BJ (cell line): ENCODE measurements at regions of chr5 and their contacts with region 1.

Region 1: DNA sequence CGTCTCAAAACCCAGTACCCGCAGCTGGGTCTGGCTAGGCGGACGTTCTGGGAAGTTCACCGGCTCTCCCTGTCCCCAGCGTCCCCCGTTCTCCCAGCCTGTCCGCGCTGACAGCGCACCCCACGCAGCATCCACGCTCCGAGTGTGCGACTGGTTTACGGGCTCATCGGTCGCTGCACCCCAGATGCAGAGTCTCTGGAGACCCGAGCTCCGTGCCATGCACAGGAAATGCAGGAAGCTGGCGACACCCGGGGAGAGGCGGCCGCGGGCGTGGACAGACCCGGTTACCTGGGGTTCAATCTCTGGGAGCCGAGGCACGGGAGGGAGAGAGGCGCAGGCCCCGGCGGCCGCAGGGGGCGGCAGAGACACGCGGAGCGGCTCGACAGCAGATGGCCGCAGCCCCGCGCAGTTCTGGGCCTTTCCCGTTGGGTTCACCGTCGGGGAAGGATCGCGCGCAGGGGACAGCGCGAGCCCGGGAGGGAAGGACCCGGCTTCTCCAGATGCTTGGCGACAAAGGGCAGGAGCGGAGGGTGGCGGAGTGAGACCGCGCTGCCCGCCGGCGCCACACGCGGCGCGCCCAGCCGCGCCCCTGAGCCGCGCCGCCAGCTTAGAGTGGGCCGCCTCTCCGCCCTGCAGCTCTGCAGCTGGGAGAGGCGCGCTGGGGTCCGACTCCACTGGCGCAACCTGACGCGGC is 558 bp downstream of the SHROOM1 start:
- DNase-seq: no peak
- H3K4me3 ChIP-seq: peak overlapping the region; percentile 58
- H3K27me3 ChIP-seq: no peaks in the 10 kb centered on the region
- CTCF ChIP-seq: peak; percentile 97

Region 2: GRCh38 chr5:132576123-132576522 is 253.8 kb before region 1 on chr5:
- CTCF ChIA-PET with region 1: no interaction called
- POLR2A ChIA-PET with region 1: no interaction called
- DNase-seq: no peak
- H3K4me3 ChIP-seq: no peak overlapping the region
- H3K27me3 ChIP-seq: no peaks in the 10 kb centered on the region
- CTCF ChIP-seq: no peak

Region 3: DNA sequence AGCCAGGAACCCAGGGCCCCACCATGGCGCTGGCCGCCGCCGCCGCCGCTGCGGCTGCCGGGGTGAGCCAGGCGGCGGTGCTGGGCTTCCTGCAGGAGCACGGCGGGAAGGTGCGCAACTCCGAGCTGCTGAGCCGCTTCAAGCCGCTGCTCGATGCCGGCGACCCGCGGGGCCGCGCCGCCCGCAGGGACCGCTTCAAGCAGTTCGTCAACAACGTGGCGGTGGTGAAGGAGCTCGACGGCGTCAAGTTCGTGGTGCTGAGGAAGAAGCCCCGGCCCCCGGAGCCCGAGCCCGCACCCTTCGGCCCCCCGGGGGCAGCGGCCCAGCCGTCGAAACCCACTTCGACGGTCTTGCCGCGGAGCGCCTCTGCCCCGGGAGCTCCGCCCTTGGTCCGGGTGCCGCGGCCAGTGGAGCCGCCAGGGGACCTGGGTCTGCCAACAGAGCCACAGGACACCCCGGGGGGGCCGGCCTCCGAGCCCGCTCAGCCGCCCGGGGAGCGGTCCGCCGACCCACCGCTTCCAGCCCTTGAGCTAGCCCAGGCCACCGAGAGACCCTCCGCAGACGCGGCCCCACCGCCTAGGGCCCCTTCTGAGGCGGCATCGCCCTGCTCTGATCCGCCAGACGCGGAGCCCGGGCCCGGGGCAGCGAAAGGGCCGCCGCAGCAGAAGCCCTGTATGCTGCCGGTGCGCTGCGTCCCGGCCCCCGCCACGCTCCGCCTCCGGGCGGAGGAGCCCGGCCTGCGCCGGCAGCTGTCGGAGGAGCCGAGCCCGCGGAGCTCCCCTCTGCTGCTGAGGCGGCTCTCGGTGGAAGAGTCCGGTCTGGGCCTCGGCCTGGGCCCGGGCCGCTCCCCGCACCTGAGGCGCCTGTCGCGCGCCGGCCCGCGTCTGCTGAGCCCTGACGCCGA is 16.0 kb before region 1 on chr5:
- CTCF ChIA-PET with region 1: interaction called, 34 read pairs
- POLR2A ChIA-PET with region 1: no interaction called
- DNase-seq: no peak
- H3K4me3 ChIP-seq: peak overlapping the region; percentile 16; the same call in 1 of the 2 replicates
- H3K27me3 ChIP-seq: peaks cover 18% of the 10 kb centered on the region
- CTCF ChIP-seq: no peak

Region 4: GRCh38 chr5:132850066-132850465 is 20.2 kb after region 1 on chr5:
- CTCF ChIA-PET with region 1: interaction called, 13 read pairs
- POLR2A ChIA-PET with region 1: no interaction called
- DNase-seq: no peak
- H3K4me3 ChIP-seq: no peak overlapping the region
- H3K27me3 ChIP-seq: no peaks in the 10 kb centered on the region
- CTCF ChIP-seq: no peak

Region 5: GRCh38 chr5:132866342-132867045 is 36.6 kb after region 1 on chr5 and contains the starts of genes GDF9 and UQCRQ:
- CTCF ChIA-PET with region 1: interaction called, 71 read pairs
- POLR2A ChIA-PET with region 1: no interaction called
- DNase-seq: peak; percentile 97
- H3K4me3 ChIP-seq: peak within 1 kb of the TSS; percentile 79
- H3K27me3 ChIP-seq: no peaks in the 10 kb centered on the region; the same call in 1 of the 2 replicates
- CTCF ChIP-seq: peak; percentile 47
- polyA plus RNA-seq, gene GDF9: 0.15 and 0.20 TPM in 2 replicates
- polyA plus RNA-seq, gene UQCRQ: 289 and 292 TPM in 2 replicates

Region 6: DNA sequence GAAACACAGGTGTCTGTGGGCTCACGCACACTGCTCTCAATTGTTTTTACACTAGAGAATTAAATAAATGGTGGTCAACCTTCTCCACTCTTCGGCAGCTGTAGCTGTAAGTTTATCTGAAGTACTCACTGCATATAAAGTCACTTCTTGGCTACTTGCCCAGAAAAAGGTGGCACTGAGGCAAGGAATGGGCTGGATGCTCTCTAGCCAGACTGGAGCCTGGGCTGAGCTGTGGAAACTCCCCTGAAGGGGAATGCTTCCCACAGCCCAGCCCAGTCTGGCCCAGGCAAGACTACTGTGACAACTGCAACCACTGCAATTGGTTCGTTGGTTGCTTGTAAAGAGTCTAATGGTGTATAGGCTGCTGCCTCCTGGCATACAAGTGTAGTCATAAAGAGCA is 48.0 kb after region 1 on chr5:
- CTCF ChIA-PET with region 1: interaction called, 111 read pairs
- POLR2A ChIA-PET with region 1: interaction called, 4 read pairs
- DNase-seq: no peak
- H3K4me3 ChIP-seq: no peak overlapping the region
- H3K27me3 ChIP-seq: no peaks in the 10 kb centered on the region; the same call in 1 of the 2 replicates
- CTCF ChIP-seq: no peak

Region 7: DNA sequence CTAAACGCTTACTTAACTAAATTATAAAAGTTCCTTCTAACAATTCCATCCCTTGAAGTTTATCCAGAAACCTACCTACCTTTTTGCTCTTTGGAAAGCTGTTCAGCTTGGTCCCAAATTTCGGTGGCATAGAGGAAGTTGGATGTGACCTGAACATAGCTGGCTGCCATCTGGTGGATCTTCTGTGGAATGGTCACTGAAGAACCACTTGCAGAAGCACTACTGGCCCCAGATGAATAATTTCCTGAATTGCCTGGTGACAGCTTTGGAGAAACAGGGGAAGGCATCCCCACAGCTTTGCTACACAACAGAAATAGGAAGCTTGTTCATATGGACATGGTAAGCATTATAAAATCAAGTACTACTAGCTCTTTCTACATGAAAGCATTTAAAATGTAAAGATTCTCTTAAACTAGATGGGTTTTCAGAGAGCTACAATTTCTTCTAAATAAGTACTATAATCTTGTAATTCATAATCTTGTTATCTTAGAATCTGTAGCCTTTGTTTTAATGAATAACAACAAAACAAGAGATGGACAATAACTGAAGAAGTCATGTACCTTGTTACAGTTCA is 53.5 kb after region 1 on chr5:
- CTCF ChIA-PET with region 1: interaction called, 111 read pairs
- POLR2A ChIA-PET with region 1: no interaction called
- DNase-seq: no peak
- H3K4me3 ChIP-seq: no peak overlapping the region
- H3K27me3 ChIP-seq: no peaks in the 10 kb centered on the region
- CTCF ChIP-seq: peak; percentile 79